Activated CD4-positive, alpha-beta memory T cell treated with anti-CD3 and anti-CD28 coated beads for 36 hours (primary cell): ENCODE measurements at regions of chr11 and their contacts with region 1.

Region 1: GRCh38 chr11:66638177-66639065 is at the start of gene RBM4:
- DNase-seq: peak; percentile 98
- H3K4me3 Mint-ChIP-seq: peak within 1 kb of the TSS; percentile 99
- H3K27ac Mint-ChIP-seq: peak within 1 kb of the TSS; percentile 98
- H3K4me1 Mint-ChIP-seq: peaks cover 63% of the 10 kb centered on the region
- H3K27me3 Mint-ChIP-seq: no peaks in the 10 kb centered on the region
- total RNA-seq, gene RBM4: 87.0 to 94.0 TPM

Region 2: DNA sequence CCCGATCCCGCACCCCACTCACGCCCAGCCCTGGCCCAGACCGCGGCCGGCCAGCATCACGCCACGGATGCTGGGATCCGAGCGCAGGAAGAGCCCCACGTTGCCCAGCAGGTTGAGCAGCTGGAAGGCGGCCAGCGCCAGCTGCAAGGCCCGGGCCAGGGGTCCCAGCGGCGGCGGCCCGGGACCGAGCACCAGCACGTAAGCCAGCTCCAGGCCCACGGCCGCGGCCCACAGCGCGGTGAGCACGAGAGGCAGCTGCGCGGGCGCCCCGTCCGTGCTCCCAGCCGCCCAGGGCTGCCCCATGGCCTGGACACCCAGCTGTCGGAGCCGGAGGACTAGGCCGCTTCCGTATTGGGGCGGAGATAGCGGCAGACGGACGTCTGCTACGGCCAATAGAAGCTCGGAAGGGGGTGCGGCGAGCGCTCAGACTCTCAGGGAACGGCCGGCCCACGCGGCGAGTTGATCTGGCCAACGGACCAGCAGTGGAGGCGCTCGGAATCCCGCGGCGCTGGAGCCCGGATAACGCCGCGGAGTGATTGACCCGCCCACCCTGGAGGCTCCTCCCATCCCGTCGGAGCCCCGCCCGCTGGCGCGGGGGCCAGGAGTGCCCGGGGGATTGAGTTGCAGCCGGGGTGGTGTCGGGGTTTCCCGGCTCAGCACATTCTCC is 92.6 kb before region 1 on chr11 and contains the start of gene ZDHHC24:
- CTCF ChIA-PET with region 1: interaction called, 3 read pairs
- POLR2A ChIA-PET with region 1: interaction called, 16 read pairs
- intact Hi-C with region 1: loop called (anchors 2 kb)
- DNase-seq: peak; percentile 96
- H3K4me3 Mint-ChIP-seq: peak within 1 kb of the TSS; percentile 80
- H3K27ac Mint-ChIP-seq: peak within 1 kb of the TSS; percentile 74
- H3K4me1 Mint-ChIP-seq: peaks cover 14% of the 10 kb centered on the region
- H3K27me3 Mint-ChIP-seq: no peaks in the 10 kb centered on the region
- total RNA-seq, gene ZDHHC24: 13.5 to 14.9 TPM

Region 3: GRCh38 chr11:66592457-66593302 is 45.7 kb before region 1 on chr11 and contains the starts of genes CCDC87 and CCS:
- CTCF ChIA-PET with region 1: interaction called, 11 read pairs
- POLR2A ChIA-PET with region 1: interaction called, 3 read pairs
- intact Hi-C with region 1: no loop called
- DNase-seq: peak; percentile 99
- H3K4me3 Mint-ChIP-seq: peak within 1 kb of the TSS; percentile 100
- H3K27ac Mint-ChIP-seq: peak within 1 kb of the TSS; percentile 90
- H3K4me1 Mint-ChIP-seq: peaks cover 30% of the 10 kb centered on the region
- H3K27me3 Mint-ChIP-seq: no peaks in the 10 kb centered on the region
- total RNA-seq, gene CCDC87: 0.12 to 0.24 TPM
- total RNA-seq, gene CCS: 24.2 to 26.9 TPM

Region 4: DNA sequence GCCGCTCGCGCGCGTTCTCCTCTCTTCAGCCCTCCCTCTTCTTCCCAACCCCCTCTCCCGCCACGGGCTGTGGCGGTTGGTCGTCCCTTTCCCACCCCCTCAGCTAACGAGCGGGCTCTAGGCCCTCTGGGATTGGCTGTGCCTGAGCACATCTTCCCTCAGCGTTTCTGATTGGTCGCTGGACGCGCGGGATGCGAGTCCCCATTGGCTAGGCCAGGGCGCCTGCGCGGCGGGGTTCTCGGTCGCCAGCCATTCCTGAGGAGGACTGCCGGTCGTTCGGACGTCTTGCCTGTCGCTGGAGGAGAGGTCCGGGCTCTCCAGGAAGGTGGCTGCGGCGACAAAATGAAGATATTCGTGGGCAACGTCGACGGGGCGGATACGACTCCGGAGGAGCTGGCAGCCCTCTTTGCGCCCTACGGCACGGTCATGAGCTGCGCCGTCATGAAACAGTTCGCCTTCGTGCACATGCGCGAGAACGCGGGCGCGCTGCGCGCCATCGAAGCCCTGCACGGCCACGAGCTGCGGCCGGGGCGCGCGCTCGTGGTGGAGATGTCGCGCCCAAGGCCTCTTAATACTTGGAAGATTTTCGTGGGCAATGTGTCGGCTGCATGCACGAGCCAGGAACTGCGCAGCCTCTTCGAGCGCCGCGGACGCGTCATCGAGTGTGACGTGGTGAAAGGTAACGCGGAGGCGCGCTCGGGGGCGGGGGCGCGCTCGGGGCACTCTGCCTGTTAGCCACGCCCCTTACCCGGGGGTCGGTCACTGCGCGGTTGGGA is 21.9 kb before region 1 on chr11 and contains the start of gene RBM14:
- CTCF ChIA-PET with region 1: interaction called, 15 read pairs
- POLR2A ChIA-PET with region 1: interaction called, 140 read pairs
- intact Hi-C with region 1: loop called (anchors 1 kb)
- DNase-seq: peak; percentile 99
- H3K4me3 Mint-ChIP-seq: peak within 1 kb of the TSS; percentile 91
- H3K27ac Mint-ChIP-seq: peak within 1 kb of the TSS; percentile 94
- H3K4me1 Mint-ChIP-seq: peaks cover 36% of the 10 kb centered on the region
- H3K27me3 Mint-ChIP-seq: no peaks in the 10 kb centered on the region
- total RNA-seq, gene RBM14: 114 to 121 TPM

Region 5: GRCh38 chr11:66626926-66627325 is 11.5 kb before region 1 on chr11:
- CTCF ChIA-PET with region 1: interaction called, 6 read pairs
- POLR2A ChIA-PET with region 1: interaction called, 140 read pairs
- intact Hi-C with region 1: no loop called
- DNase-seq: no peak
- H3K4me3 Mint-ChIP-seq: no peak overlapping the region
- H3K27ac Mint-ChIP-seq: no peak overlapping the region
- H3K4me1 Mint-ChIP-seq: peaks cover 51% of the 10 kb centered on the region
- H3K27me3 Mint-ChIP-seq: no peaks in the 10 kb centered on the region

Region 6: DNA sequence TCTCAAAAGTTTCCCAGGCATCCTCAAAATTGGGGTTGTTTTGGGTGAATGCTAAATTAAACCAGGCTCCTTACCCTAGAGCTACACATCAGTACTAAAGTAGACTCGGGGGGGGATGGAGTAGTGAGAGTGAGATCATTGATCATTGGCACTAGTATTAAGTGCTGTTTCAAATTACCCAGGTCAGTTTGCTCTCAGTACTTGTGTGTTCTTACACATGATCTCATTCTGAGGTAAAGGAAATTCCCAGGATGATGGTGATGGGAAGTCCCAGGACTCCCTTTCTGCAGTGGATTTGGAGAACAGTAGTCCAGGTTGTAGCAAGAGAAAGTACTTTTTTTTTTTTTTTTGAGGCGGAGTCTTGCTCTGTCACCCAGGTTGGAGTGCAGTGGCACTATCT is 12.6 kb after region 1 on chr11:
- CTCF ChIA-PET with region 1: interaction called, 5 read pairs
- POLR2A ChIA-PET with region 1: interaction called, 28 read pairs
- intact Hi-C with region 1: no loop called
- DNase-seq: no peak
- H3K4me3 Mint-ChIP-seq: no peak overlapping the region
- H3K27ac Mint-ChIP-seq: peak overlapping the region; percentile 33
- H3K4me1 Mint-ChIP-seq: peaks cover 55% of the 10 kb centered on the region
- H3K27me3 Mint-ChIP-seq: no peaks in the 10 kb centered on the region